Right ventricle myocardium inferior (tissue), 1 donor: ENCODE measurements at regions of chr6 and their contacts with region 1.

Region 1: GRCh38 chr6:37653933-37654565 is 43.6 kb downstream of the MDGA1 start:
- DNase-seq: no peak
- ATAC-seq: no peak

Region 2: DNA sequence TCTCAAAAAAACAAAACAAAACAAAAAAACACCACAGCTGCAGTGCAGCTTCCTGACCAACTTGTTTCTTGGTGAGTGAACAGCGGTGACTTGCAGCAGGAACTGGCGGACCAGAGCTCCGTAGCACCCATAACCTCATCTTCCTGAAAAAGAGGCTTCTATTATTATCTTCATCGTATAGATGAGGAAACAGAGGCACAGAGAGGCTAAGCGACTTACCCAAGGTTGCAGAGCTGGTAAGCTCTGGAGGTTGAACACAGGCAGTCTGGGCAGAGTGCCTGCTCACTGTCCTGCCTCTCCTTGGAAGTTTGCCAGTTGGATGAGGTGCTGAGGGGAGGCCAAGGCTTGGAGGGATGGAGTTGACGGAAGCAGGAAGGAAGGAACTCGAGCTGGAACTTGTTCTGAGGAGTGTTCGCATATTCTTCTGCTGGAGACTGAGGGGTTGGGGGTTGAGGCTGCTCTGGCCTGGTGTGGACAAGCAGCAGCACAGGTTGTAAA is 106.4 kb before region 1 on chr6:
- intact Hi-C with region 1: no loop called
- DNase-seq: no peak
- ATAC-seq: no peak

Region 3: GRCh38 chr6:38316099-38316868 is 662.2 kb after region 1 on chr6:
- intact Hi-C with region 1: loop called (anchors 5 kb)
- DNase-seq: no peak
- ATAC-seq: no peak

Region 4: DNA sequence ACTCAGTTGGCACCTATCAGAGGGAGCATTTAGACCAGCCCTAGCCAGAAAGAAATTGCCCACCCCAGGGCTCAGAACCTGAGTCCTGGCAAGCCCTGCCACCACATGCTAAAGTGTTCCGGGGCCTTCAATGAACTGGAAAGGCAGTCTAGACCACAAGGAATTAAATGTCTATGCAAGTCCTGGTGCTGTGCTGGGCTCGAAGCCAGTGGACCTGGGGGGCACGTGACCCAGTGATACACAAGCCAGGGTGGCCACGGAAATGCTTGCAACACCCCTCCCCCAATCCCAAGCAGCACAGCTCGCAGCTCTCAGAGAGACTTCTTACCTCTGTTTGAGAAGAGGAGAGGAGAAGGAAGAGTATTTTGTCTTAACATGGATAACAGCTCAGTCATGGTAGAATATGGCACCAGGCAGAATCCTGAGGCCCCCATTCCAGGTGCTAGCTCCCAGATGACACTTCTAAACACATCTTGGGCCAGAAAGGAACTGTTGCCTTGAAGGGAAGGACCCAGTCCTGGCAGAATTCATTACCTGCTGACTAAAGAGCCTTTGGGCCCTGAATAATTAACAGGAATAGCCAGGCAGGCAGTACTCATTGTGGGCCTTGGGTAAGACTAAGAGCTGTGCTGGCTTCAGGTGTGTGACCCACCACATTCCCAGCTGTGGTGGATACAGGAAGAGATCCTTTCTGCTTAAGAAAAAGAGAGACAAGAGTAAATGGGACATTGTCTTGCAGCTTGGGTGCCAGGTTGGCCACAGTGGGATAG is 874.3 kb after region 1 on chr6:
- intact Hi-C with region 1: no loop called
- DNase-seq: no peak
- ATAC-seq: no peak